CD4-positive, alpha-beta T cell (primary cell): ENCODE measurements at regions of chr10 and their contacts with region 1.

Region 1: DNA sequence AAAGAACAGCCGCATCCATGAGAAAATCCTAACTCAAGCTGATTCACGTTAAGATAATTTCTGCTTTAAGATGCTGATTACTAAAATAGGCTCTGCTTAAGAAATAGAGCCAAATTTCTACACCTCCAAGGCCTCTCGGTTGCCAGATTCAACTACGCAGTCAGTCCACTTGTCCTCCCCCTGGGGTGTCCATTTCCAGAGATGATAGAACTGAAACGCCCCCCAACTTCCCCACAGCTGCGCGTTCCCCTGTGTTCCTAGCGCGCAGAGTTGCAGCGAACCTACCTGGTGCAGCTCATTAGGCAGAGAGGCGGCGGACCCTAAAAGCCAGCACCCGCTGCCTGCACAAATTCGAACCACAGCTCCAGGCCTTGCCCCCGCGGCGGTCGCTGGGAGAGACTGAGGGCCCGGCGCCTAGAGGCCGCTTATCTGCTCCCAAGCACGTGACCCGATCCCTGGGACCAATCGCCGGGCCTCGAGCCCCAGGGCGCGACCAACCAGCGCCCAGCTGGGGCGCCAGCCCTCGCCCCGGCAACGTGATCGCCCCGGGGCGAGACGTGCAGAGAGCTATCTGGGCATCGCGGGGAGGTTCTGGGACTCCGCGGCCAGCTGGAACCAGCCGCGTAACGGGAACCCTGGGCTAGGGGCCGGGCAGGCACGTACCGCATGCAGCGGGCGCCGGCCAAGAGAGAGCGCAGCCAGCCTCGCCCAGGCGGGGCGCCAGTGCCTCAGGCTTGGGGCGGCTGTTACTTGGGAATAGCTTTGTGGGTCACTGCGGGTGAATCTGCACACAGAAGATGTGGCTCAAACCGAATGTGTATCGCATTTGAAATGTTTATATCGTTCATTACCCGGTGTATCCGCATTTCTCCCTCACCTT is at the start of gene PPP1R3C:
- DNase-seq: peak in 12 of 14 experiments; percentile 0 to 56 (median 16)
- ATAC-seq: peak; percentile 46
- H3K4me3 ChIP-seq: peak within 1 kb of the TSS; percentile 33
- H3K4me3 Mint-ChIP-seq: peak within 1 kb of the TSS; percentile 49
- H3K27ac ChIP-seq: no peak within 1 kb of the TSS
- H3K27ac Mint-ChIP-seq: no peak within 1 kb of the TSS
- H3K4me1 ChIP-seq: peaks cover 12% of the 10 kb centered on the region
- H3K4me1 Mint-ChIP-seq: peaks cover 4% of the 10 kb centered on the region
- H3K27me3 ChIP-seq: peaks cover 31 to 48% of the 10 kb centered on the region in 2 experiments
- H3K27me3 Mint-ChIP-seq: peaks cover 78% of the 10 kb centered on the region
- CTCF ChIP-seq: no peak
- total RNA-seq, gene PPP1R3C: not detected

Region 2: GRCh38 chr10:91389636-91390512 is 243.0 kb before region 1 on chr10:
- CTCF ChIA-PET with region 1: no interaction called
- POLR2A ChIA-PET with region 1: no interaction called
- intact Hi-C with region 1: loop called (anchors 1 to 2 kb)
- DNase-seq: peak in 4 of 14 experiments; percentile 31 to 85 (median 80)
- ATAC-seq: peak; percentile 99
- H3K4me3 ChIP-seq: no peak overlapping the region
- H3K4me3 Mint-ChIP-seq: no peak overlapping the region
- H3K27ac ChIP-seq: no peak overlapping the region
- H3K27ac Mint-ChIP-seq: no peak overlapping the region
- H3K4me1 ChIP-seq: no peaks in the 10 kb centered on the region
- H3K4me1 Mint-ChIP-seq: peaks cover 9% of the 10 kb centered on the region
- H3K27me3 ChIP-seq: peaks cover 0 to 10% of the 10 kb centered on the region in 2 experiments
- H3K27me3 Mint-ChIP-seq: peaks cover 28% of the 10 kb centered on the region
- CTCF ChIP-seq: peak; percentile 78